ENCODE measurements at regions of chr17 and their contacts with region 1.

Region 1: DNA sequence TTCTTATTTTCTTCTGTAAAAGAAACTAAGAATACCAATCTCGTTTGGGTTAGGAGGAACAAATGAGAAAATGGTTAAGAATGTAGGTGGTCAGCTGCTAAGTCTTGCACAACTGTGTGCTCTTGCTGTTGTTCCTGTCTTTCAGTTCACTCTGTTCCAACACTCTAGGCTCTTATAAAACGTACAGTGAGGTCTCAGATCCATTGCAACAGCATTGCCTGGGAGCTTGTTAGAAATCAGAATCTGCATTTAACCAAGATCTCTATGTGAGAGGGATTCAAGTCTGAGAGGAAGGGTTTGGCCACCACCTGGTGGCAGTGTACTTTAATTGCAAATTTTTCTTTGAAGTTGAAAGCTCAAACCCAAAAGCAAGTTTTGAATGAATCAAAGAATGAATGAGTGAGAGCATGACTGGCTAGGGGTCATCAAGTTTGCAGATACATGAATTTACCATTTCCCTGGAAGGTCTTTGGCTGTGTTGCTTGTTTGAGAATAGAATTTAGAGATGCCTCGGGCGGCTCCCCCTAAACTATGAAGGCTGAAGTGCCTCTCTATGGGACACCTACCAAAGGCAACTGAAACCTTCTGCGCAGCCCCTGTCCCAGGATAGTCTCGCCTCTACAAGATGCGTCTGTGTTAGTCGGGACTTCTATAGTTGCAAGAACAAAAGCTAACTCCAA is 2.5 kb downstream of the ALOX15B start:
- DNase-seq: no peak
- ATAC-seq: peak; percentile 16; the same call in 1 of the 2 replicates
- H3K4me3 Mint-ChIP-seq: no peak overlapping the region
- H3K27ac Mint-ChIP-seq: no peak overlapping the region
- H3K4me1 Mint-ChIP-seq: peaks cover 22% of the 10 kb centered on the region
- H3K27me3 Mint-ChIP-seq: peaks cover 14% of the 10 kb centered on the region
- CTCF ChIP-seq: 0 out of 2 replicates have a peak, but pooled peaks have one; percentile 21

Region 2: DNA sequence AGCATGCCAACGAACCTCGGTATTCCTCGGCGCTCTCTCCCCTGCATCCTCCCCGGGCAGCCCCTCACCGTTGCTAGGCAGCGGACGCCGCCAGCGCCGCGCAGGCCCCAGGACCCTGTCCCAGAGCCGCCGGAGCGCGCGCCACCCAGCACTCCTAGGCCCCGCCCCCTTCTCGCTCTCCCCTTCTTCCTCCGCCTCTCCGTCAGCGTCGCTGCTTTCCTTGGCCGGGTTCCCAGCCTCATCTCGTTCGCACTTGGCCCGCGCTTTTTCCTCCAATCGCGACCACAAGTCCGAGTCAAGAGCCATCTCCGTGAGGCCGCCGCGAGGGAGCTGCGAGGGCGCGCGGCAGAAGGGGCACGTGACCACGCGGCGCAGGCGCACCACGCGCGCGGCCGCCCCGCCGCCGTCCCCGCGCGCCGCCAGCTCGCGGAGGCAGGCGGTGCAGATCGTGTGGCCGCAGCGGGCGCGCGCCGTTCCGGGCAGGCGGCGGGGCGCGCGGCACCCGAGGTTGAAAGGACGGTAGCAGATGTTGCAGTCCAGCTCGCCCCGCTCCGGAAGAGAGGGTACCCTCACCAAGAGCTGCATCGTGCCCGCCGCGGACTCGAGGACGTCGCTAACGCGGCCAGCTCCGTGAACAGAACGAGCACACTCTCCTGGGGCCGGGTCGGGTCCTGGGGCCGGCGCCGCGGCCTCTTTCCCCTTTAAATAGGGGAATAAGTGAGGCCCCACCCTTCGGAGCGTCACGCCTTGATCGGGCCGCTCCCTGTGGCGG is 125.6 kb before region 1 on chr17 and contains the start of gene RNF227:
- CTCF ChIA-PET with region 1: interaction called, 30 read pairs
- POLR2A ChIA-PET with region 1: no interaction called
- DNase-seq: peak; percentile 90
- ATAC-seq: peak; percentile 94
- H3K4me3 Mint-ChIP-seq: peak within 1 kb of the TSS; percentile 72
- H3K27ac Mint-ChIP-seq: no peak within 1 kb of the TSS
- H3K4me1 Mint-ChIP-seq: peaks cover 13% of the 10 kb centered on the region
- H3K27me3 Mint-ChIP-seq: peaks cover 70% of the 10 kb centered on the region
- CTCF ChIP-seq: no peak
- total RNA-seq, gene RNF227: 0.83 to 1.8 TPM (median 0.94 TPM) in 3 replicates

Region 3: DNA sequence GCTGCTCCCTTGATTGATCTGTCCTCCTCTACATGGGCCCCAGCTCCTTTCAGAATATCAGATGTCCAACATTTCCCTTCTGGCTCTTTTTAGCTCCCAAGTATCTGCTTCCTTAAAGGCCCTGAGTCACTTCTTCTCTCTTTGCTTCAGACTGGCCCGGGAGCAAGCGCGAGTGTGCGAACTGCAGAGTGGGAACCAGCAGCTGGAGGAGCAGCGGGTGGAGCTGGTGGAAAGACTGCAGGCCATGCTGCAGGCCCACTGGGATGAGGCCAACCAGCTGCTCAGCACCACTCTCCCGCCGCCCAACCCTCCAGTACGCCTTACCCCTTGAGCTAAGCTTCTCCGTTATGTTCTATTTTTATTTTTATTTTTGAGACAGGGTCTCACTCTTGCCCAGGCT is 97.1 kb before region 1 on chr17:
- CTCF ChIA-PET with region 1: interaction called, 10 read pairs
- POLR2A ChIA-PET with region 1: no interaction called
- DNase-seq: no peak
- ATAC-seq: no peak
- H3K4me3 Mint-ChIP-seq: no peak overlapping the region
- H3K27ac Mint-ChIP-seq: no peak overlapping the region
- H3K4me1 Mint-ChIP-seq: no peaks in the 10 kb centered on the region
- H3K27me3 Mint-ChIP-seq: no peaks in the 10 kb centered on the region
- CTCF ChIP-seq: no peak

Region 4: DNA sequence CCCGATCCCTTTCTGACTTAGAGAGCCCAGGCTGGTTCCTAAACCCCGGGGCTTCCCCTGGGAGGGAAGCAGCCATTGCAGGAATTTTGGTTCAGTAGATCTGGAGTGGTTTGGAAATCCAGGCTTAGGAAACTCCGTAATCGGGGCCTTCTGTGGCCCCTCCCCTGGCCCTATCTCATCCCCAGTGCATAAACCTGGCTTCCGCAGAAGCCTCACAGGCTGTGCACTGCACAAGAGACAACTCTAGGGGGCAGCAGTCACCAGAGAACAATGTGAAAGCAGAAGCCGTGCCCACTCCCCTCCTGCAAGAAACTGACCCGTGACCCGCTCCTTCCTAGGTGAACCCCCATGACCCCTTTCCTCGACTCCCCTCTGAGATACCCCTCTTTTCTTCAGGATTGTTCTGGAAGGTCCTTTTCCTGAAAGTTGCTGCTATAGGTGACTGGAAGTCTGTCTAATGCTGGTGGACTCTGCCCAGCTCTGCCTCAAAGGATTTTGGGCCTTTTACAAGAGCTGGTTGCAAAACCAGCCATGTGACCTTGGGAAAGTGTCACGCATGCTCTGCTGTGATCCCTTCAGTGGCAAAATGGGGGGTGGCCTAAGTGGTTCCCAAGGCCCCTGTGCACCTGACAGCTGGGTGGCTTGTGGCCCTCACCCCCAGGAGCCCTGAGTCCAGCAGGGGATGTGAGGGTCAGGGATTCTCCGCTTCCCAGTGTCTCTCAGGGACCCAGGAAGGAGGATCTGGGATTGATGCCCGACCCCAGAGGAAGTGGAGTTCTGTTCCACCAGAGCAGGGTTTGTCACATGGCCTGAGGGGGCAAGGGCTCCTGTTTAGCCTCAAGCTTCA is 24.5 kb before region 1 on chr17:
- CTCF ChIA-PET with region 1: interaction called, 154 read pairs
- POLR2A ChIA-PET with region 1: no interaction called
- DNase-seq: peak; percentile 92
- ATAC-seq: peak; percentile 90
- H3K4me3 Mint-ChIP-seq: peak overlapping the region; percentile 84
- H3K27ac Mint-ChIP-seq: no peak overlapping the region
- H3K4me1 Mint-ChIP-seq: 0 out of 2 replicates have a peak, but pooled peaks cover 2% of the 10 kb centered on the region
- H3K27me3 Mint-ChIP-seq: peaks cover 23% of the 10 kb centered on the region
- CTCF ChIP-seq: peak; percentile 85

Region 5: DNA sequence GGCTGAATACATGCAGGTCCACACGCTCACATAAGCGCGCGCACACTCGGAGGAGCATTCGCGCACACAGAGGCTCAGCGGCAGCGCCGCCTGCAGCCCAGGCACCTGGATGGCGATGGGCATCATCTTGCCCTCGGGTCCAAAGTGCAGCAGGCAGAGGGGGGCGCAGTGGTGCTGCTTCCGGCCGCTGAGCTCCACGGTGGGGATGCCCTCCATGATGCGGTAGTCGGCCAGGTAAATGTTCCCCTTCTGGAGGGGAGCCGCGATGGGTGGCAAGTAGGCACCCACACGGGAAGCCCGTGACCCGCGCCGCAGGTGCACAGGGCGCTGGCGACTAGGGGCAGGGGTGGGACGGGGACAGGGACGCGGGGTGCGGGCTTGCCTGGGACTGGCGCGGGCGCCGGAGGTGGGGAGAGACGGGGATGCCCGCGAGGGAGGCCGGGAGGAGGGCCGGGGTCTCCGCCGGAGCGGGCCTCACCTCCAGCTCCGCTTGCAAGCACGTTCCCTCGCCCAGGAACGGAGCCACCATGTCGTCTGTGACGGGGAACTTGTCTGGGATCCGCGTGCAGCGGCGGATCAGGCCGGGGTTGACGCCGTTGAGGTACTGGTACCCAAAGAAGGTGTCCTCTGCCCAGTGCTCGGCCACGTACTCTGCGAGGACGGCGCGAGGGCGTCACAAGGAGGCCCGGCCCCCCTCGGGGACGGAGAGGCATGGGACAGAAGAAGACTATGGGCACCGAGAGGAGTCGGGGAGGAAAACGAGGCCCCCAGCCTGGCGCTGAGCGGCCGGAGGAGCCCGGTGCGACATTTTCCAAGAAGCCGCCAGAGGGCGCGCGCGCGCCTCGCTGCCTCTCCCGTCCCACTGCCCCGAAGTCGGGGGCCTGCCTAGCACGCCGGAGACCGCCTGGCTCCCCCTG is 38.2 kb after region 1 on chr17:
- CTCF ChIA-PET with region 1: interaction called, 11 read pairs
- POLR2A ChIA-PET with region 1: no interaction called
- DNase-seq: peak; percentile 86
- ATAC-seq: peak; percentile 82
- H3K4me3 Mint-ChIP-seq: peak overlapping the region; percentile 87
- H3K27ac Mint-ChIP-seq: no peak overlapping the region
- H3K4me1 Mint-ChIP-seq: peaks cover 15% of the 10 kb centered on the region
- H3K27me3 Mint-ChIP-seq: peaks cover 84% of the 10 kb centered on the region
- CTCF ChIP-seq: peak; percentile 85

Region 6: GRCh38 chr17:8156246-8156992 is 115.0 kb after region 1 on chr17:
- CTCF ChIA-PET with region 1: no interaction called
- POLR2A ChIA-PET with region 1: no interaction called
- DNase-seq: peak; percentile 100
- ATAC-seq: peak; percentile 67
- H3K4me3 Mint-ChIP-seq: no peak overlapping the region
- H3K27ac Mint-ChIP-seq: no peak overlapping the region
- H3K4me1 Mint-ChIP-seq: peaks cover 32% of the 10 kb centered on the region
- H3K27me3 Mint-ChIP-seq: peaks cover 3% of the 10 kb centered on the region; the same call in 1 of the 2 replicates
- CTCF ChIP-seq: no peak

Region 7: GRCh38 chr17:8253800-8254199 is 212.4 kb after region 1 on chr17:
- CTCF ChIA-PET with region 1: no interaction called
- POLR2A ChIA-PET with region 1: no interaction called
- DNase-seq: no peak
- ATAC-seq: no peak
- H3K4me3 Mint-ChIP-seq: no peak overlapping the region
- H3K27ac Mint-ChIP-seq: no peak overlapping the region
- H3K4me1 Mint-ChIP-seq: peaks cover 13% of the 10 kb centered on the region
- H3K27me3 Mint-ChIP-seq: no peaks in the 10 kb centered on the region
- CTCF ChIP-seq: no peak